ENCODE measurements at regions of chr17 and their contacts with region 1.

Region 1: GRCh38 chr17:50949989-50950881 is 84.1 kb upstream of the TOB1 start:
- DNase-seq: peak; percentile 91
- H3K4me3 ChIP-seq: peak overlapping the region in 1 of 4 donors; percentile 14
- H3K27ac ChIP-seq: peak overlapping the region; percentile 82 to 92 (median 84)
- H3K4me1 ChIP-seq: peaks cover 0 to 51% (median 41%) of the 10 kb centered on the region in 4 donors
- H3K27me3 ChIP-seq: no peaks in the 10 kb centered on the region
- CTCF ChIP-seq: peak; percentile 76 to 95 (median 94)
- EP300 ChIP-seq: peak in 2 of 4 donors; percentile 60 to 85
- POLR2A ChIP-seq: peak in 1 of 2 donors; percentile 31

Region 2: DNA sequence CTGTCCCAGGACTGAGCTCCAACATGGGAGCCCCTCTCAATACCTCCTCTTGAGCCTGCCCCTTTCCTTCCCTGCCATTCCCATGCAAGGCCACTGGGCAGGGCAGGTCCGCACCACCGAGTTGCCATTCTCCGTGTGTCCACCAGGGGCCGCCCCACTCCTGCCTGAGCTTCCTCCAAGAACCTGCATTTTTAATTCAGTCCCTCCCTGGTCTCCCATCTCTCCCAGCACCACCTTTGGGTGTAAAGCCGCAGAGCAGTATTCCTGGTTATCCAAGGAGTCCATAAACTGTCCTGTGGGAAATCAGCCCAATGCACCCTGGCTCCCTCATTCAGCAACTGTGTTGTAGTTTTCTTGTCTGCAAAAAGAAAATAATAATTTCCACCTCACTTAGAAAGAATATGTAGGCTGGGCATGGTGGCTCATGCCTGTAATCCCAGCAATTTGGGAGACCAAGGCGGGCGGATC is 167.0 kb before region 1 on chr17:
- intact Hi-C with region 1: loop called (anchors 5 kb)
- DNase-seq: peak; percentile 91
- H3K4me3 ChIP-seq: no peak overlapping the region
- H3K27ac ChIP-seq: no peak overlapping the region
- H3K4me1 ChIP-seq: peaks cover 0 to 22% (median 17%) of the 10 kb centered on the region in 4 donors
- H3K27me3 ChIP-seq: peaks cover 0 to 3% (median 0%) of the 10 kb centered on the region in 3 donors
- CTCF ChIP-seq: peak; percentile 98 to 100 (median 100)
- EP300 ChIP-seq: no peak
- POLR2A ChIP-seq: no peak

Region 3: GRCh38 chr17:50853015-50853615 is 97.1 kb before region 1 on chr17:
- intact Hi-C with region 1: loop called (anchors 1 kb)
- DNase-seq: no peak
- H3K4me3 ChIP-seq: no peak overlapping the region
- H3K27ac ChIP-seq: peak overlapping the region; percentile 58 to 71 (median 68)
- H3K4me1 ChIP-seq: peaks cover 0 to 20% (median 12%) of the 10 kb centered on the region in 4 donors
- H3K27me3 ChIP-seq: no peaks in the 10 kb centered on the region
- CTCF ChIP-seq: no peak
- EP300 ChIP-seq: no peak
- POLR2A ChIP-seq: no peak